Mammary epithelial cell (primary cell): ENCODE measurements at regions of chr7 and their contacts with region 1.

Region 1: GRCh38 chr7:23546897-23547572 is 15.3 kb upstream of the TRA2A start:
- DNase-seq: peak; percentile 79
- H3K4me3 ChIP-seq: no peak overlapping the region
- H3K27ac ChIP-seq: no peak overlapping the region
- H3K4me1 ChIP-seq: no peaks in the 10 kb centered on the region
- H3K27me3 ChIP-seq: no peaks in the 10 kb centered on the region
- CTCF ChIP-seq: peak; percentile 90 to 91

Region 2: GRCh38 chr7:23093546-23093945 is 453.5 kb before region 1 on chr7:
- CTCF ChIA-PET with region 1: no interaction called
- dilution Hi-C with region 1: no loop called
- in situ Hi-C with region 1: no loop called
- intact Hi-C with region 1: loop called (anchors 5 kb)
- DNase-seq: peak; percentile 88
- H3K4me3 ChIP-seq: no peak overlapping the region
- H3K27ac ChIP-seq: peak overlapping the region; percentile 53
- H3K4me1 ChIP-seq: peaks cover 11% of the 10 kb centered on the region
- H3K27me3 ChIP-seq: no peaks in the 10 kb centered on the region
- CTCF ChIP-seq: no peak

Region 3: DNA sequence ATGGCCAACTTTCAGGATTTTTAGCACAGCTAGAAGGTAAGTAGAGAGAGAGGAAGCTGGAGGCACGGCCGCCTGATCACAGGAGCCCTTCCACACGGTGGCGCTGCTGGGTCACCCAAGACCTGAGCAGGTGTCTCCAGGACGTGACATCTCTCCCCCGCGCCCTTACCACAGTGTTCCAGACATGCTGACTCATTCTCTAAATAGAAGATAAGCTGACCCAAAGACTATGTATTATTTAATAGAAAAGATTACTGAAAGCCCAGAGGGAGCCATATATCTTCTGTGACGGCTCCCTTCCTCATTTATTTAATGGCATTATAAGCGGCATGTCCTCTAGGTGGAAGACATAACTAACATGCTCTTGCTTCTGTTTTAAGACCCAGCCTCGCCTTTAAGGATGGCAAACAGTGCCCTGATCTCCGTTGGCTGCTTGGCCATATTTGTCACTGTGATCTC is 273.9 kb before region 1 on chr7:
- CTCF ChIA-PET with region 1: interaction called, 8 read pairs
- dilution Hi-C with region 1: no loop called
- in situ Hi-C with region 1: loop called (anchors 5 to 10 kb)
- intact Hi-C with region 1: loop called (anchors 1 kb)
- DNase-seq: peak; percentile 88
- H3K4me3 ChIP-seq: no peak overlapping the region
- H3K27ac ChIP-seq: no peak overlapping the region
- H3K4me1 ChIP-seq: peaks cover 5% of the 10 kb centered on the region
- H3K27me3 ChIP-seq: no peaks in the 10 kb centered on the region
- CTCF ChIP-seq: peak; percentile 82 to 94

Region 4: DNA sequence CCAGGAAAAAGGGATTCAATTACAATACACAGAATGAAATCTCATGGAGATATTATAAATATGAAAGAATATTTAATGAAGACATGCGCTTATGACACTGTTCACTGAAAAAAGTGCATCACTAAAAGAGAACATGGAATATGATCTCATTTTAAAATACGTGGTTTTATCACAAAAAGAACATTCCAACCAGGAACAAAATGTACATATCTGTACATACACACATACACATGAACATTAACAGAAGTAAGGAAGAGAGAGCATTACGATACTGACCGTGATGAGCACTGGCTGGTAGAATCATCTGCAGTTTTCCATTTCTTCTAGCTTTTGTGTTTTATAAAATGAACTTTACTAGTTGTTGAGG is 116.2 kb before region 1 on chr7:
- CTCF ChIA-PET with region 1: no interaction called
- dilution Hi-C with region 1: no loop called
- in situ Hi-C with region 1: no loop called
- intact Hi-C with region 1: loop called (anchors 1 kb)
- DNase-seq: no peak
- H3K4me3 ChIP-seq: no peak overlapping the region
- H3K27ac ChIP-seq: peak overlapping the region; percentile 43
- H3K4me1 ChIP-seq: peaks cover 12% of the 10 kb centered on the region
- H3K27me3 ChIP-seq: no peaks in the 10 kb centered on the region
- CTCF ChIP-seq: no peak

Region 5: GRCh38 chr7:23570592-23571200 is 23.7 kb after region 1 on chr7:
- CTCF ChIA-PET with region 1: interaction called, 4 read pairs
- dilution Hi-C with region 1: no loop called
- in situ Hi-C with region 1: no loop called
- intact Hi-C with region 1: loop called (anchors 1 kb)
- DNase-seq: peak; percentile 62
- H3K4me3 ChIP-seq: no peak overlapping the region
- H3K27ac ChIP-seq: no peak overlapping the region
- H3K4me1 ChIP-seq: no peaks in the 10 kb centered on the region
- H3K27me3 ChIP-seq: no peaks in the 10 kb centered on the region
- CTCF ChIP-seq: peak; percentile 82 to 87

Region 6: GRCh38 chr7:23633417-23633816 is 86.4 kb after region 1 on chr7:
- CTCF ChIA-PET with region 1: no interaction called
- dilution Hi-C with region 1: no loop called
- in situ Hi-C with region 1: no loop called
- intact Hi-C with region 1: no loop called
- DNase-seq: no peak
- H3K4me3 ChIP-seq: no peak overlapping the region
- H3K27ac ChIP-seq: no peak overlapping the region
- H3K4me1 ChIP-seq: no peaks in the 10 kb centered on the region
- H3K27me3 ChIP-seq: no peaks in the 10 kb centered on the region
- CTCF ChIP-seq: no peak

Region 7: GRCh38 chr7:24036042-24036412 is 489.0 kb after region 1 on chr7:
- CTCF ChIA-PET with region 1: no interaction called
- dilution Hi-C with region 1: no loop called
- in situ Hi-C with region 1: no loop called
- intact Hi-C with region 1: no loop called
- DNase-seq: no peak
- H3K4me3 ChIP-seq: no peak overlapping the region
- H3K27ac ChIP-seq: no peak overlapping the region
- H3K4me1 ChIP-seq: no peaks in the 10 kb centered on the region
- H3K27me3 ChIP-seq: no peaks in the 10 kb centered on the region
- CTCF ChIP-seq: no peak

Region 8: GRCh38 chr7:25093268-25093826 is 1546.3 kb after region 1 on chr7:
- CTCF ChIA-PET with region 1: no interaction called
- dilution Hi-C with region 1: no loop called
- in situ Hi-C with region 1: no loop called
- intact Hi-C with region 1: loop called (anchors 10 kb)
- DNase-seq: peak; percentile 65
- H3K4me3 ChIP-seq: no peak overlapping the region
- H3K27ac ChIP-seq: no peak overlapping the region
- H3K4me1 ChIP-seq: peaks cover 3% of the 10 kb centered on the region
- H3K27me3 ChIP-seq: no peaks in the 10 kb centered on the region
- CTCF ChIP-seq: peak; percentile 66 to 95